Panc1 (cell line): ENCODE measurements at regions of chr21 and their contacts with region 1.

Region 1: GRCh38 chr21:36319765-36320420 is at the start of gene MORC3:
- DNase-seq: peak; percentile 95
- ATAC-seq: peak; percentile 94
- H3K4me3 ChIP-seq: peak within 1 kb of the TSS; percentile 76 to 88
- H3K27ac ChIP-seq: peak within 1 kb of the TSS; percentile 84
- H3K4me1 ChIP-seq: peaks cover 7% of the 10 kb centered on the region; the same call in 1 of the 2 replicates
- H3K27me3 ChIP-seq: no peaks in the 10 kb centered on the region
- CTCF ChIP-seq: no peak
- total RNA-seq, gene MORC3: 16.8 TPM

Region 2: DNA sequence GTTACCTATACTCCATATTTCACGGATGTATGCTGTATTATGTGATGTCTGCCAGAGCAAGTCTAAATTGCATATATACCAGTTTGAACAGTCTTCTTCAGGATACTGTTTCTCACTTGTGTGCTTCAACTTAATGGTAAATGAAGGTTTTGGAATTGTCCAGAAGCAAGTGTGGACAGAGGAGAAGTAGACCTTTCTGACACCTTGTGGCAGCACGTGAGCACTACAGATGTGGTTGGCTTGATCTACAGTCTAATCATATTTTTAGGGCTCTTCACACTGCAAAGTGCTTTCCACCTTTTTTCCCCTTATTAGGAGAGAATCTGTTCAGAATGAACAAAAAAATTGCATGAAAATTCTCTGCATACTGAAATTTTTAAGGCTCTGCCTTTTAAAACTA is 11.0 kb after region 1 on chr21:
- CTCF ChIA-PET with region 1: no interaction called
- POLR2A ChIA-PET with region 1: interaction called, 21 read pairs
- in situ Hi-C with region 1: no loop called
- intact Hi-C with region 1: no loop called
- DNase-seq: no peak
- ATAC-seq: peak; percentile 89
- H3K4me3 ChIP-seq: no peak overlapping the region
- H3K27ac ChIP-seq: no peak overlapping the region
- H3K4me1 ChIP-seq: peaks cover 6% of the 10 kb centered on the region; the same call in 1 of the 2 replicates
- H3K27me3 ChIP-seq: no peaks in the 10 kb centered on the region
- CTCF ChIP-seq: peak; percentile 67; the same call in 1 of the 2 replicates